IMR-90 (cell line): ENCODE measurements at regions of chr1 and their contacts with region 1.

Region 1: DNA sequence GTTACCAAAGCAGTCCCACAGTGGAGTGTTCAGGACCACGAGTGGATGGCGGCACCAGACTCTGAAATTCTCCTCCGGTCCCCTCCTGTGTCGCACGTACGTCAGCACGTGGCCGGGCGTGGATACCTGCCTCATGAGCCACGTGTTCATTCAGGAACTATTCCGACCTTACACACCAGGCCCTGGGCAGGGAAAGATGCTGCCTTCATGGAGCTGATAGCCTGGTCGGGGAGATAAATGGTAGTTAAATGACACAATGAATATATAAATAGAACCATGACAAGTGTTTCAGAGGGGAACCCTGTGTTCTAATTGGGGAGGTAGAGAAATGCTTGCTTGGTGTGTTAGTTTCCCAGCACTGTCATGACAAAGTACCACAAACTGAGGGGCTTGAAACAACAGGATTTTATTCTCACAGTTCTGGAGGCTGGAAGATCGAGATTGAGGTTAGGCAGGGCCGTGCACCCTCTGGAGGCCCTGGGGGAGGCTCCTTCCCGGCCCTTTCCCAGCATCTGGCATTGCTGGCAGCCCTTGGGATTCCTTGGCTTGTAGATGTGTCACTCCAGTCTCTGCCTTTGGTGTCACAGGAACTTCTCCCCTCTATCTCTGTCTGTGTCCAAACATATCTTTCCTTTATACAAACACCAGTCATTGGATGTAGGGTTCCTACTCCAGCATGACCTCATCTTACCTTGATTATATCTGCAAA is 28.9 kb upstream of the GPR137B start:
- DNase-seq: no peak
- ATAC-seq: no peak
- H3K4me3 ChIP-seq: no peak overlapping the region
- H3K27ac ChIP-seq: no peak overlapping the region
- H3K4me1 ChIP-seq: no peaks in the 10 kb centered on the region
- H3K27me3 ChIP-seq: peaks cover 2% of the 10 kb centered on the region
- CTCF ChIP-seq: no peak
- POLR2A ChIP-seq: no peak
- RAD21 ChIP-seq: no peak

Region 2: GRCh38 chr1:236066828-236067386 is 46.6 kb before region 1 on chr1:
- CTCF ChIA-PET with region 1: no interaction called
- POLR2A ChIA-PET with region 1: no interaction called
- dilution Hi-C with region 1: no loop called
- in situ Hi-C with region 1: no loop called
- intact Hi-C with region 1: no loop called
- DNase-seq: no peak
- ATAC-seq: no peak
- H3K4me3 ChIP-seq: no peak overlapping the region
- H3K27ac ChIP-seq: no peak overlapping the region
- H3K4me1 ChIP-seq: peaks cover 3% of the 10 kb centered on the region; the same call in 1 of the 2 replicates
- H3K27me3 ChIP-seq: no peaks in the 10 kb centered on the region
- CTCF ChIP-seq: no peak
- POLR2A ChIP-seq: no peak
- RAD21 ChIP-seq: no peak

Region 3: DNA sequence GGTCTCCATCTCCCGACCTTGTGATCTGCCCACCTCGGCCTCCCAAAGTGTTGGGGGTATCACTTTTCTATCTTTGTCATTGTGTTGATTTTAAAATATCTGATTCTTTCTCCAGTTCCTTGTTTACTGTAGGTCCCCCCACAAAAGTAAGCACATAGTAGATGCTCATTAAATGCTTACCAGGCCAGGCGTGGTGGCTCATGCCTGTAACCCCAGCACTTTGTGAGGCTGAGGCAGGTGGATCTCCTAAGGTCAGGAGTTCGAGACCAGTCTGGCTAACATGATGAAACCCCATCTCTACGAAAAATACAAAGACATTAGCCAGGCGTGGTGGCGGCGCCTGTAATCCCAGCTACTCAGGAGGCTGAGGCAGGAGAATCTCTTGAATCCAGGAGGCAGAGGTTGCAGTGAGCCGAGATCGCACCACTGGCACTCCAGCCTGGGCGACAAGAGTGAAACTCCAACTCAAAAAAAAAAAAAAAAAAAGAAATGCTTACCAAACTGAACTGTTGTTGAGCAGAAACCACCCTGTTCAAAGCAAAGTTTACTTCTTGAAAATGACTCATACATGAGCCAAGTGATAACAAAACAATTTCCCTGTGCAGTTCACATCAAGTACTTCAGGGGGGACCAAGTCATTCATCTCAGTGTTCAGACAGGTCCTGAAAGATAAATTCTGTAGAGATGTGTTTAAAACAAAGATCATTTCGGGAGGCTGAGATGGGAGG is 24.3 kb before region 1 on chr1:
- CTCF ChIA-PET with region 1: no interaction called
- POLR2A ChIA-PET with region 1: no interaction called
- dilution Hi-C with region 1: no loop called
- in situ Hi-C with region 1: no loop called
- intact Hi-C with region 1: no loop called
- DNase-seq: peak; percentile 86
- ATAC-seq: peak; percentile 80
- H3K4me3 ChIP-seq: no peak overlapping the region
- H3K27ac ChIP-seq: no peak overlapping the region
- H3K4me1 ChIP-seq: peaks cover 2% of the 10 kb centered on the region; the same call in 1 of the 2 replicates
- H3K27me3 ChIP-seq: no peaks in the 10 kb centered on the region
- CTCF ChIP-seq: no peak
- POLR2A ChIP-seq: no peak
- RAD21 ChIP-seq: no peak

Region 4: GRCh38 chr1:236159704-236160539 is 46.4 kb after region 1 on chr1:
- CTCF ChIA-PET with region 1: no interaction called
- POLR2A ChIA-PET with region 1: no interaction called
- dilution Hi-C with region 1: no loop called
- in situ Hi-C with region 1: no loop called
- intact Hi-C with region 1: no loop called
- DNase-seq: no peak
- ATAC-seq: no peak
- H3K4me3 ChIP-seq: no peak overlapping the region
- H3K27ac ChIP-seq: no peak overlapping the region
- H3K4me1 ChIP-seq: no peaks in the 10 kb centered on the region
- H3K27me3 ChIP-seq: no peaks in the 10 kb centered on the region
- CTCF ChIP-seq: no peak
- POLR2A ChIP-seq: no peak
- RAD21 ChIP-seq: no peak

Region 5: GRCh38 chr1:236289492-236290131 is 176.1 kb after region 1 on chr1:
- CTCF ChIA-PET with region 1: interaction called, 3 read pairs
- POLR2A ChIA-PET with region 1: no interaction called
- dilution Hi-C with region 1: no loop called
- in situ Hi-C with region 1: loop called (anchors 10 kb)
- intact Hi-C with region 1: no loop called
- DNase-seq: no peak
- ATAC-seq: no peak
- H3K4me3 ChIP-seq: no peak overlapping the region
- H3K27ac ChIP-seq: no peak overlapping the region
- H3K4me1 ChIP-seq: no peaks in the 10 kb centered on the region
- H3K27me3 ChIP-seq: no peaks in the 10 kb centered on the region; the same call in 1 of the 2 replicates
- CTCF ChIP-seq: no peak
- POLR2A ChIP-seq: no peak
- RAD21 ChIP-seq: no peak

Region 6: DNA sequence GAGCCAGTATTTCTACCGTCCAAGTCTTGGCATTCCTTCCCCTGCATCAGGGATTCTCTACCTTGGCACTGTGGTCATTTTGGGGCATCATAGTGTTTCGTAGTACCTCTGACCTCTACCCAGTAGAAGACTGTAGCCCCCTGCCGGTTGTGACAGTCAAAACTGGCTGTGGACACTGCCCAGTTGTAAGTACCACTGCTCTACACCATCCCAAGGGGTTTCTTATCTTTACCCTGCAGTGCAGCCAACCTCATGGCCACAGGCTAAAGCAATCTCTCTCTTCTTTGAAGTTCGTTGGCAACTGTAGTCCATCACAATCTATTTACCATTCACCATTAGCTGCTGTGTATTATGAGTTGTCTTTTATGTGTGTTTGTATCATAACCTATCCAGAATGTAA is 197.6 kb after region 1 on chr1:
- CTCF ChIA-PET with region 1: no interaction called
- POLR2A ChIA-PET with region 1: no interaction called
- dilution Hi-C with region 1: no loop called
- in situ Hi-C with region 1: no loop called
- intact Hi-C with region 1: no loop called
- DNase-seq: no peak
- ATAC-seq: no peak
- H3K4me3 ChIP-seq: no peak overlapping the region
- H3K27ac ChIP-seq: no peak overlapping the region
- H3K4me1 ChIP-seq: no peaks in the 10 kb centered on the region
- H3K27me3 ChIP-seq: no peaks in the 10 kb centered on the region
- CTCF ChIP-seq: no peak
- POLR2A ChIP-seq: no peak
- RAD21 ChIP-seq: no peak

Region 7: DNA sequence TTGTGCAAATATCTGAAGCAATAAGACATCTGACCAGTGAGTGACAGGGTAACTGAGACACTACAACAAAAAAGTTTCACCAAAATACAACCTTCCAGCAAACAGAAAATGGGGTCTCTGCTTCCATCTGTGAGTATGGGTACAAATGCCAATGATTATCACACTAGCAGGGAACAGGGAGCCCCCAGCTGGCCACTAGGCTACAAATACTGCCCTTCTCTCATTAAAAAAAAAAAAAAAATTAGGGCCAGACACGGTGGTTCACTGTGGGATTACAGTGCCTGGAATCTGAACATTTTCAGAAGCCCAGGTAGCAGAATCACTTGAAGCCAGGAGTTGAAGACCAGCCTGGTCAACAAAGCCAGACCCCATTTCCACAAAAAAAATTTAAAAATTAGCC is 232.2 kb after region 1 on chr1:
- CTCF ChIA-PET with region 1: interaction called, 5 read pairs
- POLR2A ChIA-PET with region 1: no interaction called
- dilution Hi-C with region 1: no loop called
- in situ Hi-C with region 1: no loop called
- intact Hi-C with region 1: loop called (anchors 10 kb)
- DNase-seq: no peak
- ATAC-seq: no peak
- H3K4me3 ChIP-seq: no peak overlapping the region
- H3K27ac ChIP-seq: no peak overlapping the region
- H3K4me1 ChIP-seq: no peaks in the 10 kb centered on the region
- H3K27me3 ChIP-seq: no peaks in the 10 kb centered on the region
- CTCF ChIP-seq: no peak
- POLR2A ChIP-seq: no peak
- RAD21 ChIP-seq: no peak

Region 8: DNA sequence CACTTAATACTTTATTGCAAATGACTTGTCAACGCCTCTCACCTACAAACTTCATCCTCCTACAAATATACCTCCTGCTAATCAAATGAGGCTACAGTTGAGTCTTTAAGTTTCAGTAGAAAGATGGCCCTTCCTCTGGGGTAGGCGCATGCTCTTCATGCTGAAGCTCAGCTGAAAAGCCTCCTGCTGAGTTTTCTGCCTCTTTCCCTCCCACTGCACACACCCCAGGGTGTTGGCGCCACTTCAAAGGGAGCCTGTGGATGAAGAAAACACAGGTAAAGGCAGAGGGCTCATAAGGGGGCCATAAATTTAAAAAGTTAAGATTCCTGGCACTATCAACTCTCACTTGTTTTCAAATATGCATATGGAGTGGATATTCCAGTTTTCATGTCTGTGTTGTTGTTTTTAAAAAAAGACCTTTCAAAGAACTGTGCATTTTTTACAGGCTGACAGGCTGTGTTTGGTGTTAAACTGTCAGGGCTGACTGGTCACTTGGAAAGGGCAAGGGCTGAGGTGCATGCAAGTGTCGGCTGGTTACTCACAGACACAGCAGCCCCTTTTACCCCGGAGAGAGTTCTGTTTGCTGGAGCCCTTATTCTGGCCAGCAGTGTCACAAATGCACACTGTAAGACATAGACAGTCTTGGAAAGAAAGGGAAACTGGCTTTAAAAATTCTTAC is 367.4 kb after region 1 on chr1:
- CTCF ChIA-PET with region 1: interaction called, 3 read pairs
- POLR2A ChIA-PET with region 1: no interaction called
- dilution Hi-C with region 1: no loop called
- in situ Hi-C with region 1: loop called (anchors 5 kb)
- intact Hi-C with region 1: no loop called
- DNase-seq: no peak
- ATAC-seq: no peak
- H3K4me3 ChIP-seq: no peak overlapping the region
- H3K27ac ChIP-seq: no peak overlapping the region
- H3K4me1 ChIP-seq: no peaks in the 10 kb centered on the region
- H3K27me3 ChIP-seq: no peaks in the 10 kb centered on the region; the same call in 1 of the 2 replicates
- CTCF ChIP-seq: no peak
- POLR2A ChIP-seq: no peak
- RAD21 ChIP-seq: no peak